ENCODE measurements at regions of chr12 and their contacts with region 1.

Region 1: GRCh38 chr12:71754461-71755145 is at the start of gene RAB21:
- DNase-seq: peak; percentile 100
- ATAC-seq: peak; percentile 98
- H3K4me3 ChIP-seq: peak within 1 kb of the TSS; percentile 93
- H3K27ac ChIP-seq: peak within 1 kb of the TSS; percentile 95 to 99
- H3K4me1 ChIP-seq: peaks cover 2 to 3% of the 10 kb centered on the region in 2 donors
- H3K27me3 ChIP-seq: no peaks in the 10 kb centered on the region
- total RNA-seq, gene RAB21: 97.2 to 113 TPM

Region 2: DNA sequence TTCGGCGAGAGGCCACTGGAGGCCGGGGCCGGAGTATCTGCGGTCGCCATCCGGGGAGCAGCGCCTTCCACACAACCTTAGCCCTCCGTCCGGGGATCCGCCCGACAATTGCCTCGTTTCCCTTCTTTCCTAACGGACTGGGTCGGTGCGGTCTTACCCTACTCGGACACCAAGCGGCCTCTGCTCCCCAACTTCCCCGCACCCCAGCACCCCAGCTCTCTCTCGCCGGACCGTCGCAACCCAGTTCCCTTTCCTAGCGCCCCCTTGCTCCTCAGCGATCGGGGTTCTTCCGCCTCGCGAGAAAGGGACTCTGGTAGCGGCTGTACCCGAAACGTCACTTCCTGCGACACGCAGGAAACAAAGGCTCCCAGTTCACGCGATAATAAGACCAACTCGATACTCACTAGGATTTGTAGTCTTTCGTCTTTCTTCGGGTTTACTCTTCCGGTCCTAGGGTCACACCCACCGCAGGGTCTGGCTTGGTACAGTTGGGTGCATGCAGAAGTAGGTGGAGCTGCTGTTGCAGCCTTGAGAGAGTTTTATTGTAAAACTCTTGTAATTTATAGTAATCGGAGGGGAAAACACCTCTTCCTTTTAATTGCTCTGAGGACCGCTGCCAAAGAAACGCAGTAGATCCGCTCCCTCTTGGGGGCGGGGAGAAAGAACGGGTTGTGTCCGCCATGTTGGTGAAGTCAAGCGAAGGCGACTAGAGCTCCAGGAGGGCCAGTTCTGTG is 90.9 kb before region 1 on chr12 and contains the start of gene ZFC3H1:
- intact Hi-C with region 1: loop called in 1 of 2 experiments (anchors 10 kb)
- DNase-seq: peak; percentile 95 to 96
- ATAC-seq: peak; percentile 97
- H3K4me3 ChIP-seq: peak within 1 kb of the TSS; percentile 78 to 84
- H3K27ac ChIP-seq: peak within 1 kb of the TSS; percentile 95 to 96
- H3K4me1 ChIP-seq: no peaks in the 10 kb centered on the region
- H3K27me3 ChIP-seq: no peaks in the 10 kb centered on the region
- total RNA-seq, gene ZFC3H1: 71.7 to 95.3 TPM

Region 3: DNA sequence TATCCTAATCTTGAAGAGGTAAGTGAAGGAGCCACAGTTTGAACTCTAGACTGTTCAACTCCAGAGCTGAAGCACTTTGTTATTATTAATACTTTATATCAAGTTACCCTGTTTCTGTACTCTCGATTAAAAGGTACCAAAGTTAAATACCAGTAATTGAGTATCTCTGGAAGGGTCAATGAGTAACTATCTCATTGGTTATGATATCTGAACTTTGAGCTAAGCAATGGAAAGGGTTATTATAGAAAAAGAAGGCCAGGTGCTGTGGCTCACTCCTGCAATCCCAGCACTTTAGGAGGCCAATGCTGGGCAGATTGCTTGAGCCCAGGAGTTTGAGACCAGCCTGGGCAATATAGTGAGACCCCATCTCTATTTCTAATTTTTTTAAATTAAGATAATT is 58.8 kb before region 1 on chr12:
- intact Hi-C with region 1: no loop called
- DNase-seq: no peak
- ATAC-seq: no peak
- H3K4me3 ChIP-seq: no peak overlapping the region
- H3K27ac ChIP-seq: no peak overlapping the region
- H3K4me1 ChIP-seq: no peaks in the 10 kb centered on the region
- H3K27me3 ChIP-seq: no peaks in the 10 kb centered on the region

Region 4: GRCh38 chr12:71840231-71840847 is 85.7 kb after region 1 on chr12:
- intact Hi-C with region 1: loop called (anchors 10 kb)
- DNase-seq: no peak
- ATAC-seq: peak; percentile 60
- H3K4me3 ChIP-seq: peak overlapping the region; percentile 91 to 97
- H3K27ac ChIP-seq: peak overlapping the region; percentile 50 to 94
- H3K4me1 ChIP-seq: peaks cover 0 to 8% of the 10 kb centered on the region in 2 donors
- H3K27me3 ChIP-seq: no peaks in the 10 kb centered on the region

Region 5: DNA sequence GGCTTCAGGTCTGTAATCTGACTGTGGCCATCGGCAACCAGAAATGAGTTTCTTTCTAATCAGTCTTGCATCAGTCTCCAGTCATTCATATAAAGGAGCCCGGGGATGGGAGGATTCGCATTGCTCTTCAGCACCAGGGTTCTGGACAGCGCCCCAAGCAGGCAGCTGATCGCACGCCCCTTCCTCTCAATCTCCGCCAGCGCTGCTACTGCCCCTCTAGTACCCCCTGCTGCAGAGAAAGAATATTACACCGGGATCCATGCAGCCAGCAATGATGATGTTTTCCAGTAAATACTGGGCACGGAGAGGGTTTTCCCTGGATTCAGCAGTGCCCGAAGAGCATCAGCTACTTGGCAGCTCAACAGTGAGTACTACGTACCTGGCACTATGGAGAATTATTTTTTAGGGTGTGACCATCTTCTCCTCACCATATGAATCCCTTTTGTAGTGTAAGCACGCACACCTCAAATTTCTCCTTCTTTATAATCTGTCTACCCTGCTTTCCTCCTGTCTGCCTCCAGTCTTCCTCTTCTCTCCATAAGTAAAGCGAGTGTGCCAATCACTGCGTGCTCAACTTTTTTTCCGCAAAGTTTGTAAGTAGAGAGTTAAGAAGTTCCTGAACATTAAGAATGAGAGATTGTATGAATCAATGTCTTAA is 184.3 kb after region 1 on chr12 and contains the start of gene TPH2:
- intact Hi-C with region 1: no loop called
- DNase-seq: peak; percentile 48 to 74
- ATAC-seq: no peak
- H3K4me3 ChIP-seq: no peak within 1 kb of the TSS
- H3K27ac ChIP-seq: no peak within 1 kb of the TSS
- H3K4me1 ChIP-seq: no peaks in the 10 kb centered on the region
- H3K27me3 ChIP-seq: peaks cover 0 to 2% of the 10 kb centered on the region in 2 donors
- total RNA-seq, gene TPH2: not detected